KBM-7 (cell line): ENCODE measurements at regions of chr3 and their contacts with region 1.

Region 1: GRCh38 chr3:184362668-184363540 is 1.4 kb downstream of the POLR2H start:
- DNase-seq: peak; percentile 98

Region 2: DNA sequence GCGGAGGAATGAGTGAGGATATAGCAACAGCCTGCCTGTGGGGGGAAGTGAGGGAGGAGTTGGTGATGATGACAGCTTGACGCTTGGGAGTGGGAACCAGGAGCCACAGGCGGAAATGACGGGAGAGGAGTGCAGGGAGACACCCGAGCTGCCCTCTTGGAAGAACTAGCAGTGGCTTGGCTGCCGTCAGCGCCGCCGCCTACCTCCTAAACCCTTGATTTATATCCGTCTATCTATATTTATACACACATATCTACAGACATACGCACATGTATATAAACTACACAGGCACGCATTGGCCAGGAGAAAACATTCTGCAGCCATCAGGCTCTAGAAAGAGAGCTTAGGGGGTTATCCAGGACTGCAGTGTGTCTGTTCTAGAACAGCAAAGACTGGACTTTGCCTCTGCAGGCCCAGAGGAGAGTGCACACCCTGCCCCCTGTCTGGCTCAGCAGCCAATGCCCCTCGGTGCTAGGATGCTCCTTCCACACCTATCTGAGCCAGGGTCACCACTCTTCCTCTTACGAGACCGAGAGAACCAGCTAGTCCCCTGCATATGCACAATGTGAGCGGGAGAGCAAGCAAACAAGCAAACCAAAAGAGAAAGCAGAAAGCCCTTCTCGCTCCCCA is 394.2 kb after region 1 on chr3:
- in situ Hi-C with region 1: loop called (anchors 25 kb)
- DNase-seq: peak; percentile 76